Activated B cell treated with CpG ODN at 0.5 μM for 24 hours (primary cell): ENCODE measurements at regions of chr10 and their contacts with region 1.

Region 1: GRCh38 chr10:91006001-91006751 is 85.3 kb upstream of the ANKRD1 start:
- DNase-seq: no peak
- ATAC-seq: peak; percentile 73
- H3K4me3 Mint-ChIP-seq: peak overlapping the region; percentile 74
- H3K27ac Mint-ChIP-seq: peak overlapping the region; percentile 91
- H3K4me1 Mint-ChIP-seq: peaks cover 75% of the 10 kb centered on the region
- H3K27me3 Mint-ChIP-seq: no peaks in the 10 kb centered on the region
- CTCF ChIP-seq: peak; percentile 80

Region 2: DNA sequence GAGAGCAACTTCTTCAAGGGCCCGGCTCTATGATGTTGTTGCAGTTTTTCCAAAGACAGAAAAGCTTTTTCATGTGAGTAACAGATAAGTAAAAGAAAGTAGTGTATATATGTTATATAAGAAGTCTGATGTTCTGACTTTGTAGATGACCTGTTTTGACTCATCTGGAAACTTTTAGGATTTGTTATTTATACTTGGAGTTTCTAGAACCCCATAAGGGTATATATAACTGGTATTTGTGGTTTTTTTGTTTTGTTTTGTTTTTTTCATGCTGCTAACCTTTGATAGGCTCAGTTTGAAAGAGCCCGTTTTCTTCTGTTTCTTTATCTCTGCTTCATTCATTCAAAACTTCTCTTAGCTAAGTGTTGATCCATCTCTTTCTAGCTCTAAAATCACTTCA is 127.1 kb before region 1 on chr10:
- CTCF ChIA-PET with region 1: no interaction called
- POLR2A ChIA-PET with region 1: no interaction called
- intact Hi-C with region 1: no loop called
- DNase-seq: no peak
- ATAC-seq: no peak
- H3K4me3 Mint-ChIP-seq: no peak overlapping the region
- H3K27ac Mint-ChIP-seq: no peak overlapping the region
- H3K4me1 Mint-ChIP-seq: peaks cover 2% of the 10 kb centered on the region
- H3K27me3 Mint-ChIP-seq: no peaks in the 10 kb centered on the region
- CTCF ChIP-seq: no peak

Region 3: GRCh38 chr10:90890347-90890746 is 115.8 kb before region 1 on chr10:
- CTCF ChIA-PET with region 1: no interaction called
- POLR2A ChIA-PET with region 1: no interaction called
- intact Hi-C with region 1: no loop called
- DNase-seq: no peak
- ATAC-seq: no peak
- H3K4me3 Mint-ChIP-seq: no peak overlapping the region
- H3K27ac Mint-ChIP-seq: no peak overlapping the region
- H3K4me1 Mint-ChIP-seq: no peaks in the 10 kb centered on the region
- H3K27me3 Mint-ChIP-seq: no peaks in the 10 kb centered on the region
- CTCF ChIP-seq: no peak

Region 4: DNA sequence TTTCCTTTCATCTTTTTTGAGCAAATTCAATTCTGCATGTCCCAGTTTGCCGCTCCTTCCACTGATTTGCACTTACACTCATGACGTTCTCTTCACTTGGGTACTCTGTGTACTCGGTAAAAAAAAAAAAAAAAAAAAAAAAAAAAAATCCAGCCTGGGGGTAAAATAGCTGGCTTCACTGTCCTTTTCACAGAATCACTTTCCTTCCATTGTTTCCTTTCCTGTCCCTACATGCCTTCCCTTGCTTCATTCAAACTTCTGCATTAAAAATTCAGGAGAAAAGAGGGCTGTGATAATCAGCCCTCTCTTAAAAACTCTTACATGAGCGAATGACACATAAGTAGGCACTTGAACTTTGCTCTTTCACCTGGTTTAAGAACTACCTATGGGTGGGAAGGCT is 94.0 kb before region 1 on chr10:
- CTCF ChIA-PET with region 1: interaction called, 80 read pairs
- POLR2A ChIA-PET with region 1: interaction called, 20 read pairs
- intact Hi-C with region 1: loop called (anchors 1 kb)
- DNase-seq: no peak
- ATAC-seq: no peak
- H3K4me3 Mint-ChIP-seq: no peak overlapping the region
- H3K27ac Mint-ChIP-seq: no peak overlapping the region
- H3K4me1 Mint-ChIP-seq: peaks cover 19% of the 10 kb centered on the region
- H3K27me3 Mint-ChIP-seq: no peaks in the 10 kb centered on the region
- CTCF ChIP-seq: no peak

Region 5: DNA sequence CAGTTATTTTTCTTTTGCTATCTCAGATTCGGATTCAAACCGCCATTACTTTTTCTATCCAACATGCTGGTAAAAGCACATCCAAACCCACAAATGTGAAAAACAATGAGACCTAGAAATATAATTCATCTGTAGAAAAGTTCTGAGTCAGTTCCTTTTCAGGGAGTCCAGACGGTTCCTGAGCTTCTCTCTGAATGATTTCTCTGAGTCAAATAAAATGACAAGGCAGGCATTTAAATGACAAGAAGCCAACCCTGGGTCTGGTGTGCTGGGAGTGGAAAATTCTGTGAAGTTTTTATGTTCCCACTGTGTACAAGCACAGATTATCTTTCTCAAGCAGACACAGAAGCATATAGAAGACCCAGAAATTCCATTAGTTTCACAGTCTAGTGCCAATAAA is 11.0 kb after region 1 on chr10:
- CTCF ChIA-PET with region 1: interaction called, 16 read pairs
- POLR2A ChIA-PET with region 1: no interaction called
- intact Hi-C with region 1: no loop called
- DNase-seq: no peak
- ATAC-seq: no peak
- H3K4me3 Mint-ChIP-seq: no peak overlapping the region
- H3K27ac Mint-ChIP-seq: no peak overlapping the region
- H3K4me1 Mint-ChIP-seq: peaks cover 6% of the 10 kb centered on the region
- H3K27me3 Mint-ChIP-seq: no peaks in the 10 kb centered on the region
- CTCF ChIP-seq: no peak

Region 6: DNA sequence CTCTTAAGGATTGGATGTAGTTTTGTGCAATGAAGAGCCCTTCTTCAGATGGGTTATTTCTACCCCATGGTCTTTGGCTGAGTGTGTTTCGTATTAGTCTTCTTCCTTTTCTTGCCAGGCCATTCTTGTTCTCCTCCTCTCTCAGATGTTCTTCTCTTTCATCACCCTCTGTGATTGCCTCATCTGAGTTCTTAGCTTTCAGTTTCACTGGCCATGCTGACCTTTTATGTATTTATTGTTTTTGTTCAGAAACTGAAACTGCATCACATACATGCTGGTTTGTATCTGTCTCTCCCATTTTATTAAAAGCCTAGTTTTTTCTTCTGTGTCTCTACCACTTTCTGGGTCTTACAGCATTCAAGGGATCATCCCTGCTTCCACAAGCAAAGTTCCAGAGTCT is 192.6 kb after region 1 on chr10:
- CTCF ChIA-PET with region 1: no interaction called
- POLR2A ChIA-PET with region 1: interaction called, 7 read pairs
- intact Hi-C with region 1: loop called (anchors 5 kb)
- DNase-seq: no peak
- ATAC-seq: peak; percentile 23
- H3K4me3 Mint-ChIP-seq: peak overlapping the region; percentile 11
- H3K27ac Mint-ChIP-seq: peak overlapping the region; percentile 86
- H3K4me1 Mint-ChIP-seq: peaks cover 88% of the 10 kb centered on the region
- H3K27me3 Mint-ChIP-seq: no peaks in the 10 kb centered on the region
- CTCF ChIP-seq: no peak

Region 7: DNA sequence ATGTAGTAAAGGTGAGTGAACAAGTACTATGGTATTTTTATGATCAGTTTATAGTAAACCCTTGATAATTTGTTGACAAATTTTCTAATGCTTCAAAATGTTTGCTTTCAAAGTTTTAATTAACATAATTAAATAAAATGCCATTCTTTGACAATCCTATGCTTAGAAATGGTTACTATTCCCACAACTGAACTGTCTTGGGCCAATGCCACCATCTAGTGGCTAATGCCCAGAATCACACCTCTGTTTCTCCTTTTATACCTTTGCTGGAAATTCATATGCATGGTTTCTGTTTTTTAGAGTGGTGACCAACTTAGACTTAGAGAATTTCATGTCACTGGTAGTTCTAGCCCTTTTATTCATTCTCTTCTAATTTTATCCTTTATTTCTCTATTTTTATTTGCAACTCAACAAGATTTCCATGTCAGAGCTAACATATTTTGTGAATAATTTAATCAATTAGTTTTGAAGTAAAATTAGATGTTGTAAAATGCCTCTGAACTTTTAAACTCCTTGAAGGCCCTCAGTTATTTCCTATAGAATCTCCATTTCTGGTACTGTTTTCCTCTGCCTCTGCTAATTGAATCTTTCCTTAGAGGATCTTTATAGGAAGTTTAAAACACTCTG is 245.4 kb after region 1 on chr10:
- CTCF ChIA-PET with region 1: interaction called, 148 read pairs
- POLR2A ChIA-PET with region 1: interaction called, 10 read pairs
- intact Hi-C with region 1: loop called (anchors 1 kb)
- DNase-seq: no peak
- ATAC-seq: peak; percentile 82
- H3K4me3 Mint-ChIP-seq: no peak overlapping the region
- H3K27ac Mint-ChIP-seq: no peak overlapping the region
- H3K4me1 Mint-ChIP-seq: peaks cover 4% of the 10 kb centered on the region
- H3K27me3 Mint-ChIP-seq: no peaks in the 10 kb centered on the region
- CTCF ChIP-seq: peak; percentile 97

Region 8: GRCh38 chr10:91409869-91410637 is 403.9 kb after region 1 on chr10 and contains the start of gene HECTD2:
- CTCF ChIA-PET with region 1: no interaction called
- POLR2A ChIA-PET with region 1: no interaction called
- intact Hi-C with region 1: loop called (anchors 2 kb)
- DNase-seq: peak; percentile 84
- ATAC-seq: peak; percentile 82
- H3K4me3 Mint-ChIP-seq: peak within 1 kb of the TSS; percentile 89
- H3K27ac Mint-ChIP-seq: peak within 1 kb of the TSS; percentile 90
- H3K4me1 Mint-ChIP-seq: peaks cover 13% of the 10 kb centered on the region
- H3K27me3 Mint-ChIP-seq: no peaks in the 10 kb centered on the region
- CTCF ChIP-seq: no peak
- total RNA-seq, gene HECTD2: 8.1 and 8.6 TPM in 2 replicates